AG04449 (cell line): ENCODE measurements at regions of chr18 and their contacts with region 1.

Region 1: DNA sequence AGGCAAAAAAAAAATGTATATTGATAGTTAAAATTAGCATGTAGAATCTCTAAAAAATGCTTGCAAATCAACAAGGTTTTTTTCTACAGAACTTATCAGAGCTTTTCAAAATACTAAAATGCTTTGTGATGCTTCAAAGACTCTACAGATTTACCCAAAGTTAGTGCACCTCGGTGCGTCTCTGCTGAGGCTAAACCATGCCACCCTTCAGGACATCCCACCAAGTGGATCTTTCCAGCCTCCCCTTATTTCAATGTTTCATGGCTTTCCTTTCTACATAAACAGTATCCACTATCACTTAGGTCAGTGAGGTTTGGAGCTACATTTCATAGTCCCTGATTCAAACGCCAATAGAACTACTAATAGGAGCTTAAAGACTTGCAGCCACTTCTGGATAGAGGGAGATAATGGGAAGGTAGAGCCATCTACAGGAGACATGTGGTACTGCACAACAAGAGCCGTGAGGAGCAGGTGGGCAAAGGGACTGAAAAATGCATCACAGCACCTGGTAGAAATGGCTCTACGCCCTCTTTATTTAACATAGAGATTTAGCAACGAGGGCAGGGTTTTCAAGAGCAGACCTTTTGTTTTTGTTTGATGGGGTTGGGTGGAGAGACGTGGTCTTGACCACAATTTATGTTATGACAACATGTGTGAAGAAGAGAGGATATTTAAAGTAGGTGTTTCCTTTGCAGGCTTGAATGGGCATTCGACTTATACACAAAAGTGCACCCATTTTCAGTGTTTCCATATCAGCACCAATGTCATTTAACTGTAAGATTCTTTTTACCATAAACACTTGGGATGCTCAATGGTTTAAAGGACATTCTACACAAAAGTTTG is 56.1 kb upstream of the SLC35G4 start:
- DNase-seq: peak; percentile 5
- H3K4me3 ChIP-seq: no peak overlapping the region
- CTCF ChIP-seq: peak; percentile 81

Region 2: DNA sequence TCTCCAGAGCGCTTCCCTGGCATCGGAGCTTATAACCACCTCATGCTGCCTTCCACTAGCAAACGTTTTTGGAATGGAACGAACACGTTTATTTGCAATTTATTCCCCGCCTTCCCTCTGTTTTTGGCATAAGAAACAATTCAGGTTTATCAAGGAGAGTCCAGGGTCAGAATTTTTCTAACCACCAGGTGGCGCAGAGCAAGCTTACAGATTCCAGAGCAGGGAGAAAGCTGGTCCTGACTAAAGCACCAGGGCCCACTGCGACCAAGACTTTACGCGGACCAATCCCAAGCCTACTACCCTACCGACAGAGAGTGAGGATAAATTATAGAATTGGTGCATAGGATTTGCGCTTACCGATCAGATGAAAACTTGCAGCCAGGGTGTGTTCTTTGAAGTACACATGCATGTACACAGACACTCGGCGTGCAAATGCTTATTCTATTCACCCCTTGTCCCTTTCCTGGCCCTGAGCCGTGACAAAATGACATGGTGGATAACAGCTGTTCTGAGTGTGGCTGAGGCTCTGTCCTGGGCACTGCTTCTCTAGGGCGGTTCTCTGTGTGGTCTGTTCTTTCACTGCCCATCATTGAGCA is 992.8 kb before region 1 on chr18:
- CTCF ChIA-PET with region 1: interaction called, 28 read pairs
- POLR2A ChIA-PET with region 1: no interaction called
- DNase-seq: no peak
- H3K4me3 ChIP-seq: peak overlapping the region; percentile 25
- CTCF ChIP-seq: peak; percentile 71

Region 3: GRCh38 chr18:11040823-11041656 is 512.3 kb before region 1 on chr18:
- CTCF ChIA-PET with region 1: interaction called, 10 read pairs
- POLR2A ChIA-PET with region 1: no interaction called
- DNase-seq: no peak
- H3K4me3 ChIP-seq: no peak overlapping the region
- CTCF ChIP-seq: peak; percentile 67

Region 4: DNA sequence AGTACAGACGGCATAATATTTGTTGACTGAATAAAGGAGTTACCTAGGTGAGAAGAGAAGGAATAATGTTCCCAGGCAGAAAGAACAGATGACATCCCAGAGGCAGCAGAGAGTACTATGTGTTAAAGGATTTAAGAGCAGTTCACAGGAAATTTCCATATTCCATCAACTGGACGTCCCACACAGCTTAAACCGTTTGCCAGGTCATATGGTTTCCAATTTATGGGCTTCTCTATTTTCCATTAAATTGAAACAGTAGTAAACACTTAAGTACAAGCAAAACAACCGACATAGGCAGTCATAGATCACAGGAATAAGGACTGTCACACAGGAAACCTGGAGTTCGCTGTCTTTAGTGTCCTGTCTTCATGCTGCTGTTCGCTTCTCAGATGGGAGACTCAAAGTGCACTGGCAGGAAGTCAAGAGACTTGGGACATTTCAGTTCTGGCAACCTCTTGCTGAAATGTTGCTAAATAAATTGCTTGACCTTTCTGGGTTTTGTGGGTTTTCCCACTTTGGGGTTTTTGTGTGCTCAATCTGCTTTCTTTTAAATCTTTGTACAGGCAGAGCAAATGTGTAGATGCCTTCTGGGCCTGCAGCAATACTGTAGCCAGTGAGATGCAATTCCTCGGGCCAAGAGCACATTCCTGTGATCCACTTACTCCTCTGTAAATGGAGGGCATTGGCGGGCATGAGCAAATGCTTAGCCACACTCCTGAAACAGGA is 398.1 kb before region 1 on chr18:
- CTCF ChIA-PET with region 1: interaction called, 19 read pairs
- POLR2A ChIA-PET with region 1: no interaction called
- DNase-seq: no peak
- H3K4me3 ChIP-seq: no peak overlapping the region
- CTCF ChIP-seq: no peak

Region 5: DNA sequence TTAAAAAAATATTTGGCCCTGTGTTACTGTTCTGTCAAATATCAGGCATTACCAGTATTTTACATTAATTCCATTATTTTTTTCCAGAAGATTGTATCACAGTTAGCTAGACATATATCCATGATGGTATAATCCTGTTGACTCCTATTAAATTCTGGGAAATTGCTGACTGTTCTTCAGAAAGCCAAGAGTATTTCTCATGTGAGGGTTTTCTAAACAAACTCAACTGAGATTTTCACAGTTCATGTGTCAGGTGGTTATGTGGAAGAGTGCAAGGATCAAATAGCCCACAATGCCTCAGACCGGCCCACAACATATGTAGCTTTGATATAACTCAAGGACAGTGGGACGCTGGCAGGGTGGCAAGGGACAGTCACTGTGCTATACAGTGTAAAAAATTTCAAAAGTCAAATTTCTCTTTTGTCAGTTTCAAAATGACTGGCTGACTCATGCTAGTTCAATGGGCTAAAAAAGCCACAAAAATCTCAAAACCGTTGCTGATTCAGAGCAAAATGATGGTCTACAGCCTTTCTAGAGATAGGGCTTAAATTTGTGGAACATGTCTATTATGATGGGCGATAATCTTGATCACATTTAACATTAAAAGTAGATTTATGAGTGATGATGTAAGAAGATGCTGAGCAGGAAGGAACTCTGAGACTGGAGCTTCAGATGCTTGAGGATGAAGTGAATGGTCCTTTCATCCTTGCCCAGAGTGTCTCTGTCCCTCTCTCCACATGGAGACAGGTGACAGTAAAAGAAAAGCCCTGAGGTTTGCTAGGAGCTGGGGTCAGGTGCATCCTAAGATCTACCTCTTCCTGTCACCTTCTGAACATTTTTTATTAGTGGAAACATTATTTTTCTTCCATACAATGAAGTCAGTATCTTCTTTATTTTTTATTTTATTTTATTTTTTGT is 228.1 kb before region 1 on chr18:
- CTCF ChIA-PET with region 1: interaction called, 10 read pairs
- POLR2A ChIA-PET with region 1: no interaction called
- DNase-seq: peak; percentile 67
- H3K4me3 ChIP-seq: no peak overlapping the region
- CTCF ChIP-seq: no peak

Region 6: DNA sequence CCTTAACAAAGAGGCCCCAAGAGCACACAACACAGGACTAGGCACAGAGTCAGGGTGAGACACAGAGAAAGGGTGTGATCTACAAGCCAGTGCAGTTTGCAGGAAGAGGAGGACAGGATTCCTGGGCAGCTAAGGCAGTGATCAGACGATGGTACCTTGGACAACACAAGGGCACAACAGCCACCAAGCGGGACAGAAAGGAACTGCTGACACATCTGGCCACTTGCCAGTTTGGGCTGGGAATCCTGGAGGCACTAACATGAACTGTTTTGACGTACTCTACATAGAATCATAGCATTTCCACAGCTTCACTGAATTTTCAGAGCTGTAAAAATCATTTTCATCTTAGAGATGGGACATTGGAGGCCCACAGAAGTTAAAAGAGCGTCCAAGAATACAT is 165.4 kb before region 1 on chr18:
- CTCF ChIA-PET with region 1: no interaction called
- POLR2A ChIA-PET with region 1: no interaction called
- DNase-seq: no peak
- H3K4me3 ChIP-seq: no peak overlapping the region
- CTCF ChIP-seq: no peak

Region 7: GRCh38 chr18:11541202-11541601 is 12.1 kb before region 1 on chr18:
- CTCF ChIA-PET with region 1: interaction called, 23 read pairs
- POLR2A ChIA-PET with region 1: no interaction called
- DNase-seq: no peak
- H3K4me3 ChIP-seq: no peak overlapping the region
- CTCF ChIP-seq: no peak